Activated CD4-positive, alpha-beta T cell treated with anti-CD3 and anti-CD28 coated beads for 36 hours (primary cell): ENCODE measurements at regions of chr6 and their contacts with region 1.

Region 1: DNA sequence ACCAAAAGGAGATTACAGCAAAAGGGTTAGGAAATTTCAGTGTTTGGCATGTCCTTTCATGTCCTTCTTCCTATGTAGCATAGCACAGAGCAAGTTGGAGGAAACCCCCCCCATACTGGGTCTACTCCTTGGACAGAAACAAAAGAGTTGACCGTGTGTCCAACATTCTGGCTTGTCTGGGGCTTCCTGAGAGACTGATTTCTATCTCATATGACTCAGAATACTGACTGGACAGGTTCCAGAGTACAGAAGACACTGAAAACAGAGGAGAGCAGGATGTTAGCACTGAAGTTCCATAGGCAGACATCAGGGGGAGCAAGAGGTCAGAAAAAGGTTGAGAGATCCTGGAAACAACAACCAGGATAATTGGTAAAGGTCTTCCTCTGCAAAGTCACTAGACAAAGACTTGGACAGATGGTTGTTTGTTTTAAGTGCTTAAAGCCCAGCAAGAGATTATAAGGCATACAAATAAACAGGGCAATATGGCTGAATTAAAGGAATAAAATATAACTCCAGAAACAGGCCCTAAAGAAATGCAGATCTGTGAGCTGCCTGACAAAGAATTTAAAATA is 48.4 kb downstream of the USP49 start:
- DNase-seq: peak; percentile 67
- ATAC-seq: peak; percentile 85
- H3K4me3 Mint-ChIP-seq: no peak overlapping the region
- H3K27ac Mint-ChIP-seq: no peak overlapping the region
- H3K4me1 Mint-ChIP-seq: peaks cover 5% of the 10 kb centered on the region
- H3K27me3 Mint-ChIP-seq: no peaks in the 10 kb centered on the region

Region 2: DNA sequence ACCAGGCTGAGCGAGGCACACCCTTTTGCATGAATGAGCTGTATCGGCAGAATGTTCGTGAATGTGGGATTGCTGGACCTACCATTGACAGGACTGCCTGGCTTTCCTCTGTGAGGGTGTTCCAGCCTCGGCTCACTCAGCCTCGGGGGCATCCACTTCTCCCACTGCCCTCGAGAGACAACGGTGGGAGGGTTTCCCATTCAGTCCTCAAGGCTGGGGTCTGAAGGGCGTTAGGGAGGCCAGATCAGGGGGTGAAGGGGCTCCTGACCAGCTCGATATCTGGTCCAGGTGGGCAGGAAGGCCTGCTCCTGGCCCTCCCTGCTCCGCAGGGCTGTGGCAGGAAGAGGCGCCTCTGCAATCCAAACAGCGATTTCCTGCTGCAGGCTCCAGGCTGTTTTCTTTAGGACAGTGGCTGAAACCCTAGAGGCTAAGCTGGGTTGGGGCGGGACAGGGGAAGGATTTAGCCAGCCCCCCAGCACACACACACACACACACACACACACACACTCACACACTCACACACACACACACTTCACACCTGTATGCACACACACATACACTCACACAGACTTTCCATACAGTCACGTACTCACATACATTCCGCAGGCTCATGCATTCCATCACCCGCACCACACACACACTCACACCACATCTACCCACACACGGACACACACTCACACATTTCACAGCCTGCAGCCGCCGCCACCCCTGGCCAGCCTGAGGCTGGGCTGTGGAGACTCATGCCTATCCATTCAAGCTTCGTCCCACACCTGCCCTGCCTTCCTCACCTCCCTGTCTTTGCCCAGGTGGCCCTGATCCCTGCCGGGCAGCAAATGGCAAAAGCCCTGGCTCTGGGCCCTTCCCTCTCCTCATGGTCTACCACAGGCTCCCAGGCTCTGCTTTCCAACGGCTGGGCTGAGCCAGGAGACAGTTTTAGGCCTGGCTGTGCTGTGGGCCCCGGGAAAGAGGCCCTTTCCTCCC is 190.8 kb before region 1 on chr6:
- CTCF ChIA-PET with region 1: no interaction called
- POLR2A ChIA-PET with region 1: no interaction called
- intact Hi-C with region 1: no loop called
- DNase-seq: no peak
- ATAC-seq: no peak
- H3K4me3 Mint-ChIP-seq: no peak overlapping the region
- H3K27ac Mint-ChIP-seq: no peak overlapping the region
- H3K4me1 Mint-ChIP-seq: no peaks in the 10 kb centered on the region
- H3K27me3 Mint-ChIP-seq: peaks cover 17% of the 10 kb centered on the region

Region 3: GRCh38 chr6:41936073-41936837 is 89.5 kb after region 1 on chr6:
- CTCF ChIA-PET with region 1: interaction called, 3 read pairs
- POLR2A ChIA-PET with region 1: no interaction called
- intact Hi-C with region 1: loop called in 1 of 2 experiments (anchors 5 kb)
- DNase-seq: peak; percentile 83
- ATAC-seq: peak; percentile 54
- H3K4me3 Mint-ChIP-seq: peak overlapping the region; percentile 100
- H3K27ac Mint-ChIP-seq: peak overlapping the region; percentile 96
- H3K4me1 Mint-ChIP-seq: peaks cover 55% of the 10 kb centered on the region
- H3K27me3 Mint-ChIP-seq: no peaks in the 10 kb centered on the region